ENCODE measurements at regions of chr7 and their contacts with region 1.

Region 1: DNA sequence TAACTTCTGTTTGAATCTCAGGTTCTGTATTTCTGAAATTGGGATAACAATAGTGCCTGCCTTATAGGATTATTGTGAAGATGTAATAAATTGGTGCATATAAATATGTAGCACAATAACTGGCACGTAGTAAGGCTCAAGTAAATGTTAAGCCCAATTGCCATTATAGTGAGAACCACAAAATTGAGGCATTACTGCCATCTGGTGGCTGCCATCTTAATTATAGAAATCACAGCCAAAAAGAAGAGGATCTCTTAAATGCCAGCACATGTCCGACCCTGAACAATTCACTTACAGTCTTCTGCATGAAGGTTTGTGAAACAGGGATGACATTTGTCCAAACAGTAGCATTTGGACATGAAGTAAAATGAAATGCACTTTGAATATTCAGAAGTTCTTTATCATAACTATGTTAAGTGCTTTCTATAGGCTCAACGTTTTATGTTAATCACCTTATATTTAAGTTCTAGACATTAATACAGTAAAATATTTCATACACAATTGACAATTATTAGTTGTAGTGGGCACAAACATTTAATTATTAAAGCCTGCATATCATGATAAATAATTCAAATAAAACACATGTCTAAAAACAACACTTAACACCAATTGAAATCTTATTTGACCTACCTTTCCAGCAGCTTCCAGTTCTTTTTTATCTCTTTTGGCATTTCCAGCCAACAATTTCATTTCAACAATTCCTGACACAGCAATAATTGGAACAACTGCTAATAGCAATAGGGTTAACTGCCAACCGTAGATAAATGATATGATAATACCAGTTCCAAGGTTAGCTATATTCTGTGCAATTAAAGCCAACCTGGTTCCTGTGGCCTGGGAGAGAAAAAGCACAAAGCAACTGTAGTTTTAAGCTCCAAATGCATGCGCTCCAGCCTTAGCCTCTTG is 58.5 kb downstream of the ABCB4 start:
- DNase-seq: no peak
- ATAC-seq: peak; percentile 54

Region 2: DNA sequence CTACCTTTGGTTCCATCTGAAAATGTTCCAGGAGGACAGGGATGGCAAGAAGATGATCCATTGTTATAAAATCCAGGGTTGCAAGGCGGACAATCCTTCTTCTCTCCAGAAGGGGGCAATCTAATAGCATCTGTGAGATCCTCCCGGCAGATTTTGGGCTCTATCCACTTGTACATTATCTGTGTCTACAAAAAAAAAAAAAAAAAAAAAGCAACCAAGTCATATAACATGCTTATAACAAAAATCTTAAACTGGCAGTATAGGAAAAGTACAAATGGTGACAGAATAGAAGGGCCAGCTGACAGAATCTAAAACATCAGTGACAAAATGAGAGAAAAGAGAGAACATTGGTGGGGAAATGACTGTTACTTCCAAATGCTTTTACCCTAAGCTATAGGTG is 490.2 kb before region 1 on chr7:
- intact Hi-C with region 1: loop called (anchors 5 kb)
- DNase-seq: no peak
- ATAC-seq: no peak

Region 3: DNA sequence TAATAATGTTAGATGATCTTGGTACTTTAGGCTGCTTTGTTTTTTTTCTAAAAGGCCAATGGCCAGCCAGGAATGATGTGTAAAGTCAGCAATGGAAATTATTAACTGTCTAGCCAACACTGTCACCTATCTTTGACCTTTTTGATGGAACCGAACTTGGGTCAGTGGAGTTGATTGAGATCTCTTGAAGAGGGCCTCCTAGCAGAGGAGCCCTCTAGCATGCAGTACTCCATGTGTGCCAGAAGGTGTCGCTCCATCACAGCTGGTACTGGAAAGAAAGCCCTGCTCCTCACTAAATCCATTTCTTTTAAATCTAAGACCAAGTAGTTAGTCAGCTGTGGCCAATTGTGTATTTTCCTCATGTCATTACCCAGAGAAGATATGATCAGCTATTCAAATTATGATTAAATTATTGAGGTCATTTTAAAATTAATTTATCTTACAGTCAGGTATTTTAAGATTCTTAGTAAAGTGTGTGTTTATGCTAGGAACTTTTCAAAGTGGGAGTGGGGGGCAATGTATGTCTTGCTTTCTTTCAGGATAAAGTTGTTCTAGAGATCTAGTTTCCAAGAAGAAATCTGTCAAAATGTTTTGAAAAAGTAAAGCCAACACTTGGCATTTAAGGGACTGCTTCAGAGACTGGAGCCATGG is 104.6 kb before region 1 on chr7:
- intact Hi-C with region 1: loop called (anchors 2 kb)
- DNase-seq: no peak
- ATAC-seq: no peak

Region 4: GRCh38 chr7:88015309-88015708 is 598.4 kb after region 1 on chr7:
- intact Hi-C with region 1: no loop called
- DNase-seq: no peak
- ATAC-seq: no peak